Heart right ventricle (tissue), 16 donors: ENCODE measurements at regions of chr18 and their contacts with region 1.

Region 1: DNA sequence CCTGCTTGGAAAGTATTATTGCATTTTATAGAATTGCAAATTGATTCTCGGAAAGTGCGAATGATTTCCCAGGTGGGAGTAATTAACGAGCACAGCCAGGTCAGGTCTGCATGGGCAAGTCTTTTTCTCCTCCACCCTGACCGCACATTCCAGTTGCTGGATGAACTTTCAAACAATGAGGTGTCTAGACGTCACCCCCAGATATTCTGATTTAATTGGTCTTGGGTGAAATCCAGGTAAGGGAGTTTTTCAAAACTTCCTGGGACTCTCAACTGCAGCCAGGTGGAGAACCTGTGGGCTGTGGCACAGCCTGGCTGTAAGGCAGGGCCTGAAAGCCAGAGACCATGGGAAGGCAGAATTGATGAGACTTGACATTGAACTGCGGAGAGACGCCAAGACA is 15.9 kb upstream of the RNF152 start:
- DNase-seq: no peak
- ATAC-seq: no peak
- H3K4me3 ChIP-seq: no peak overlapping the region
- H3K27ac ChIP-seq: no peak overlapping the region
- H3K4me1 ChIP-seq: no peaks in the 10 kb centered on the region
- H3K27me3 ChIP-seq: no peaks in the 10 kb centered on the region
- CTCF ChIP-seq: no peak

Region 2: GRCh38 chr18:61371111-61371510 is 537.5 kb before region 1 on chr18:
- intact Hi-C with region 1: no loop called
- DNase-seq: no peak
- ATAC-seq: no peak
- H3K4me3 ChIP-seq: no peak overlapping the region
- H3K27ac ChIP-seq: no peak overlapping the region
- H3K4me1 ChIP-seq: no peaks in the 10 kb centered on the region
- H3K27me3 ChIP-seq: no peaks in the 10 kb centered on the region
- CTCF ChIP-seq: no peak

Region 3: DNA sequence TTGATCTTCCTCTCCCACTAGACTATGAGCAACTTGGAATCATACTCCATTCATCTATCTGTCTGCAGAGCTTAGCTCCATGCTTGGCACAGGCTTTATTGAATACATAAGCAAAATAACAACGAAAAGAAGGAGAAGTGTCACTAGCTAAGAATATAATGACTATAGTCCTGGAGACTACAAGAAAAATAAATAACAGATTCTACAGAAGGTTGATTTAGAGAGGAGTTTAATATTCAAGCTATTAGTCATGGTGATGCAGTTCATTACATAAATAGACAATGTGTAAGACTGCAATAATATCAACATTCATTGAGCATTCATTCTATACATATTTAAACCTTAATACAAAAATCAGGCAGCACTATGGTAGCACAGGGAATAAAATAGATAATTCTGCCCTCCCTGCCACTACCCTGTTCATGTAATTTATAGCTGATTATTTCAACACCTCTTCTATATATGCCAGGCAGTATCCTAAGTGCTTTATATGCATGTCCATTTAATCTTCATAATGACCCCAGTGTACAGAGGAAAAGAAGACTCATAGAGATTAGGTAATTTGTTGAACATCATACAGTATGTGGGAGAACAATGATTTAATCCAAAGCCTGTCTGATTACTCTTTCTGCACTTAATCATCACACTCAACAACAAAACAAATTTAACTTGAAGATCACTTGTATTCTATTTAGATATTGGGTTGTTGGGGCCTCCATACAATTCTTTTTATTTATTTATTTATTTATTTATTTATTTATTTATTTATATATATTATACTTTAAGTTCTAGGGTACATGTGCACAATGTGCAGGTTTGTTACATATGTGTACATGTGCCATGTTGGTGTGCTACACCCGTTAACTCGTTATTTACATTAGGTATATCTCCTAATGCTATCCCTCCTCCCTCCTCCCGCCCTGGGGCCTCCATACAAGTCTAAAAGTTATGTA is 181.1 kb before region 1 on chr18:
- intact Hi-C with region 1: no loop called
- DNase-seq: no peak
- ATAC-seq: no peak
- H3K4me3 ChIP-seq: no peak overlapping the region
- H3K27ac ChIP-seq: no peak overlapping the region
- H3K4me1 ChIP-seq: peaks cover 0 to 23% (median 9%) of the 10 kb centered on the region in 9 donors
- H3K27me3 ChIP-seq: no peaks in the 10 kb centered on the region
- CTCF ChIP-seq: no peak

Region 4: GRCh38 chr18:61854578-61855448 is 53.8 kb before region 1 on chr18:
- intact Hi-C with region 1: loop called in 1 of 10 experiments (anchors 5 kb)
- DNase-seq: no peak
- ATAC-seq: peak in 2 of 8 donors; percentile 38 to 44
- H3K4me3 ChIP-seq: no peak overlapping the region
- H3K27ac ChIP-seq: peak overlapping the region in 2 of 10 donors; percentile 1 to 57
- H3K4me1 ChIP-seq: peaks cover 3 to 97% (median 37%) of the 10 kb centered on the region in 9 donors
- H3K27me3 ChIP-seq: no peaks in the 10 kb centered on the region
- CTCF ChIP-seq: no peak